CD8-positive, alpha-beta T cell (primary cell): ENCODE measurements at regions of chr10 and their contacts with region 1.

Region 1: GRCh38 chr10:33134011-33134751 is 176.2 kb upstream of the ITGB1 start:
- DNase-seq: peak in 8 of 9 experiments; percentile 51 to 87 (median 72)
- ATAC-seq: peak; percentile 67
- H3K4me3 ChIP-seq: no peak overlapping the region
- H3K4me3 Mint-ChIP-seq: no peak overlapping the region
- H3K27ac ChIP-seq: peak overlapping the region; percentile 30 to 55
- H3K27ac Mint-ChIP-seq: peak overlapping the region; percentile 66
- H3K4me1 ChIP-seq: peaks cover 48% of the 10 kb centered on the region
- H3K4me1 Mint-ChIP-seq: peaks cover 70% of the 10 kb centered on the region
- H3K27me3 ChIP-seq: no peaks in the 10 kb centered on the region
- H3K27me3 Mint-ChIP-seq: no peaks in the 10 kb centered on the region
- CTCF ChIP-seq: no peak

Region 2: GRCh38 chr10:33193057-33193700 is 59.0 kb after region 1 on chr10:
- CTCF ChIA-PET with region 1: no interaction called
- POLR2A ChIA-PET with region 1: no interaction called
- intact Hi-C with region 1: no loop called
- DNase-seq: peak; percentile 25 to 84 (median 69)
- ATAC-seq: peak; percentile 58
- H3K4me3 ChIP-seq: no peak overlapping the region
- H3K4me3 Mint-ChIP-seq: no peak overlapping the region
- H3K27ac ChIP-seq: no peak overlapping the region
- H3K27ac Mint-ChIP-seq: no peak overlapping the region
- H3K4me1 ChIP-seq: no peaks in the 10 kb centered on the region
- H3K4me1 Mint-ChIP-seq: no peaks in the 10 kb centered on the region
- H3K27me3 ChIP-seq: no peaks in the 10 kb centered on the region
- H3K27me3 Mint-ChIP-seq: peaks cover 4% of the 10 kb centered on the region
- CTCF ChIP-seq: peak; percentile 59

Region 3: GRCh38 chr10:33248638-33249037 is 114.5 kb after region 1 on chr10:
- CTCF ChIA-PET with region 1: no interaction called
- POLR2A ChIA-PET with region 1: no interaction called
- intact Hi-C with region 1: loop called in 1 of 2 experiments (anchors 5 kb)
- DNase-seq: peak in 3 of 9 experiments; percentile 21 to 85 (median 70)
- ATAC-seq: peak; percentile 95
- H3K4me3 ChIP-seq: peak overlapping the region in 1 of 2 experiments; percentile 26
- H3K4me3 Mint-ChIP-seq: peak overlapping the region; percentile 37
- H3K27ac ChIP-seq: no peak overlapping the region
- H3K27ac Mint-ChIP-seq: peak overlapping the region; percentile 65
- H3K4me1 ChIP-seq: peaks cover 28% of the 10 kb centered on the region
- H3K4me1 Mint-ChIP-seq: peaks cover 38% of the 10 kb centered on the region
- H3K27me3 ChIP-seq: no peaks in the 10 kb centered on the region
- H3K27me3 Mint-ChIP-seq: no peaks in the 10 kb centered on the region
- CTCF ChIP-seq: no peak